ENCODE measurements at regions of chr19 and their contacts with region 1.

Region 1: GRCh38 chr19:55339048-55339888 is at the start of gene KMT5C:
- DNase-seq: peak; percentile 100
- ATAC-seq: peak; percentile 89
- H3K4me3 Mint-ChIP-seq: peak within 1 kb of the TSS; percentile 83
- H3K27ac Mint-ChIP-seq: peak within 1 kb of the TSS; percentile 100
- H3K4me1 Mint-ChIP-seq: peaks cover 13% of the 10 kb centered on the region
- H3K27me3 Mint-ChIP-seq: peaks cover 26% of the 10 kb centered on the region
- CTCF ChIP-seq: no peak
- total RNA-seq, gene KMT5C: 49.1 to 63.1 TPM (median 52.3 TPM) in 3 replicates

Region 2: GRCh38 chr19:55279770-55280643 is 59.3 kb before region 1 on chr19 and contains the start of gene HSPBP1:
- CTCF ChIA-PET with region 1: interaction called, 4 read pairs
- POLR2A ChIA-PET with region 1: interaction called, 13 read pairs
- DNase-seq: peak; percentile 99
- ATAC-seq: peak; percentile 91
- H3K4me3 Mint-ChIP-seq: peak within 1 kb of the TSS; percentile 96
- H3K27ac Mint-ChIP-seq: peak within 1 kb of the TSS; percentile 99
- H3K4me1 Mint-ChIP-seq: peaks cover 18% of the 10 kb centered on the region
- H3K27me3 Mint-ChIP-seq: no peaks in the 10 kb centered on the region
- CTCF ChIP-seq: no peak
- total RNA-seq, gene HSPBP1: 57.1 to 65.2 TPM (median 60.9 TPM) in 3 replicates

Region 3: DNA sequence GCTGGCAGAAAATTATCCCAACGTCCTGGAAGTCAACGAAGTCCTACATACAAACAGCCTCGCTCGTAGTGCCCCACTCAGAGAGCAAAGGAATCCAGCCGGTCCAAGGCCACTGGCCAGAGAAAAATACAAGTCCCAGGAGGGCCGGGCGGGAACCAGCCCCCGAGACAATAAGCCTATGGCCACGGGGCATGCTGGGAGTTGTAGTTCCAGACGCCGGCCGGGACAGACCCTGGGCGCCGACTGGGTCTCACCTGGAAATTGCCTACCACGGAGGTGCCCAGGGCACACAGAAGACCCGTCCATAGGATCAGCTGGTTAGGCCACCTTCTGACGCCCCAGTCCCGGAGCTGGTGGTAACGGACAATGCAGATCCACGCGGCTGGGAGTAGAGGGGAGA is 19.5 kb before region 1 on chr19:
- CTCF ChIA-PET with region 1: interaction called, 10 read pairs
- POLR2A ChIA-PET with region 1: interaction called, 3 read pairs
- DNase-seq: peak; percentile 93
- ATAC-seq: peak; percentile 98
- H3K4me3 Mint-ChIP-seq: peak overlapping the region; percentile 71
- H3K27ac Mint-ChIP-seq: peak overlapping the region; percentile 39
- H3K4me1 Mint-ChIP-seq: peaks cover 18% of the 10 kb centered on the region
- H3K27me3 Mint-ChIP-seq: peaks cover 27% of the 10 kb centered on the region
- CTCF ChIP-seq: no peak

Region 4: DNA sequence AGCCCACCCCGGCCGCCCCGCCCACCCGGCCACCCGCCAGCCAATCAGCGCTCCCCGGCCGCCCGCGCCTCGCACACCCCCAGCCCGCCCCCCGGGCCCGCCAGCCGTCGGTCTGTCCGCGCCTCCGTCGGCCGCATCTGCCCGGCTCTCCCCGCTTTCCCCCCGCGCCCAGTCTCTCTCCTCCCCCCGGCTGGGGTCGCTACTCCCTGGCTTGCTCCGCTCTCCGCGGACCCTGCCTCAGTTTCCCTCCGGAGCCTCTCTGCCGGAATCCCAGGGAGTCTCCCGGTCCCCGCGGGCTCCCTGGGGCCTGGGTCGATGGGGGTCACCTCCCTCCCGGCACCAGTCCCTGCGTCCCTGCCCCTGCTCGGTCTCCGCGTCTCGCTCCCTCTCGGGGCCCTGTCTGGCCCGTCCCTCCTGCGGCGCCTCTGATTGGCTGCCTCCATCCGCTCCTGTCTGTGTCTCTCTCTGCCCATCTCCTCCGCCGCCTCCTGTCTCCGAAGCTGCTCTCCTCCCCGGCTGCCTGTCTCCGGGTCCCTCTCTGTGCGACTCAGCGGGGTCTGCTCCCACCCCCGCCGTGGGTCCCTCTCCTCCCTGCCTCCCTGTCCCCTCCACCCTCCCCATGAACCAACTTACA is 30.5 kb after region 1 on chr19:
- CTCF ChIA-PET with region 1: interaction called, 8 read pairs
- POLR2A ChIA-PET with region 1: interaction called, 12 read pairs
- DNase-seq: peak; percentile 82
- ATAC-seq: peak; percentile 76
- H3K4me3 Mint-ChIP-seq: peak overlapping the region; percentile 83
- H3K27ac Mint-ChIP-seq: no peak overlapping the region; the same call in 1 of the 2 replicates
- H3K4me1 Mint-ChIP-seq: peaks cover 19% of the 10 kb centered on the region
- H3K27me3 Mint-ChIP-seq: peaks cover 75% of the 10 kb centered on the region
- CTCF ChIP-seq: no peak

Region 5: GRCh38 chr19:55385353-55385739 is 46.1 kb after region 1 on chr19:
- CTCF ChIA-PET with region 1: interaction called, 15 read pairs
- POLR2A ChIA-PET with region 1: interaction called, 21 read pairs
- DNase-seq: peak; percentile 98
- ATAC-seq: peak; percentile 82
- H3K4me3 Mint-ChIP-seq: peak overlapping the region; percentile 100
- H3K27ac Mint-ChIP-seq: peak overlapping the region; percentile 99
- H3K4me1 Mint-ChIP-seq: peaks cover 43% of the 10 kb centered on the region
- H3K27me3 Mint-ChIP-seq: peaks cover 24% of the 10 kb centered on the region
- CTCF ChIP-seq: no peak

Region 6: GRCh38 chr19:55418185-55418584 is 78.9 kb after region 1 on chr19:
- CTCF ChIA-PET with region 1: interaction called, 13 read pairs
- POLR2A ChIA-PET with region 1: interaction called, 4 read pairs
- DNase-seq: peak; percentile 71
- ATAC-seq: peak; percentile 97
- H3K4me3 Mint-ChIP-seq: no peak overlapping the region
- H3K27ac Mint-ChIP-seq: no peak overlapping the region; the same call in 1 of the 2 replicates
- H3K4me1 Mint-ChIP-seq: peaks cover 2% of the 10 kb centered on the region
- H3K27me3 Mint-ChIP-seq: peaks cover 78% of the 10 kb centered on the region
- CTCF ChIP-seq: peak; percentile 40

Region 7: DNA sequence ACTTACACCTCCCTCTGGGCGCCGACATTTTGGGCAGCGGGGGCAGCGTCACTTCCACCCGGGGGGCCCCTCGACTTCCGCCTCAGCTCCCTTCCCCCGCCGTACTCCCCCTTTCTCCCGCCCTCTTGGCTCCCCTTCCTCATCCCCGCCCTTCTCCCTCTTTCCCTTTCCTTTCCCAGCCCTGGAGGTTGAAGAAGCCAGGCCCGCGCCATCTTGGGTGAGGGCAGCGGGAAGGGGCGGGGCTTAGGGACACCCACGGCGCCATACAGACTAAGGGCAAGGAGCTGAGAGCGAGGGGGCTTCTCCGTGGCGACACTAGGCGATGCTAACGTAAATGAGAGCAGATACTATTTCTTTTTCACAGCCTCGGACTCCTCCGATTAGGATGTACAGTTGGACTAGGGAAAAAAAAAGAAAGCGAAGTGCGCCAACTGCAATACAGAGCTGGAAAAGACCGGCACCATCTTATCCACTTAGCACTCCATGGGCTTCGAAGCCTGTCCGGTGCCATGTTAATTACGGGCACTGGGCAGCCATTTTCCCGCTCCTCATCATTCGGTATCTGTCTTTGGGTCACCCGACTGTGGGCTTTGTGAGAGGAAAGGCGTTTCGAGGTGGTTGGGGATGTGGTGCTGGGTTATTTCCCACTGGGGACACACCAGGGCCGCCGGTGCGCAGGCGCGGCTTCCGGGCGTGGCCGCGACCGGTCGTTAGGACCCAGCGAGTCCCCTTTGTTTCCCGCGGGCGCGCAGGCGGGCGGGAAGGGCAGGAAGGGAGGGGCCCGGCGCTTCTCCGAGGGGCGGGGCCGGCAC is 260.4 kb after region 1 on chr19 and contains the start of gene FIZ1:
- CTCF ChIA-PET with region 1: no interaction called
- POLR2A ChIA-PET with region 1: interaction called, 10 read pairs
- DNase-seq: peak; percentile 98
- ATAC-seq: peak; percentile 54
- H3K4me3 Mint-ChIP-seq: peak within 1 kb of the TSS; percentile 98
- H3K27ac Mint-ChIP-seq: peak within 1 kb of the TSS; percentile 100
- H3K4me1 Mint-ChIP-seq: peaks cover 29% of the 10 kb centered on the region
- H3K27me3 Mint-ChIP-seq: no peaks in the 10 kb centered on the region; the same call in 1 of the 2 replicates
- CTCF ChIP-seq: no peak
- total RNA-seq, gene FIZ1: 20.1 to 22.7 TPM (median 20.6 TPM) in 3 replicates